Breast epithelium (tissue), 4 donors: ENCODE measurements at regions of chr2 and their contacts with region 1.

Region 1: DNA sequence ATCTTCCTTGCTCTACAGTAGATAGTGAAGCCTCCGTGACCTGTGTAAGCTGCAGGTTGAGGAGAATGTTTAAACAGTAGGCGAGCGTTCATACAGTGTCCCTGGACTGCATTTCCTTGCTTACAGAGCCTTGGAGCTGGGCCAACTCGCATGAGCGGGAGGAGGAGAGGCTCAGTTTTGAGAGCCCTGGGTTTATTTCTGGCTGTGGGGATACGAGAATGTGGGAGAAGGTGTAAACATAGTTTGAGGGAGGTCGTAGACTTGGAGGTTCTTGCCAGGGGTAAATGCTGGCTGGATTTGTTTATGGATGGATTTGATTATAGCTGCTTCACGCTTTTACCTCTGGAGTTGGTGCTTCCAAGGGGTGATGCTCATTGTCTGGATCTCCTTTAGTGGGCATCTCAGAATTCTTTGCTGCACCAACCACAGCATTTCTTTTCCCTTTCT is 20.8 kb downstream of the CRIM1 start:
- DNase-seq: peak; percentile 64 to 75
- H3K4me3 ChIP-seq: peak overlapping the region in 1 of 3 donors; percentile 31
- H3K27ac ChIP-seq: peak overlapping the region; percentile 49 to 56
- H3K4me1 ChIP-seq: peaks cover 14 to 28% of the 10 kb centered on the region in 2 donors
- H3K27me3 ChIP-seq: no peaks in the 10 kb centered on the region
- CTCF ChIP-seq: no peak
- POLR2A ChIP-seq: no peak

Region 2: GRCh38 chr2:38377050-38377828 is 2000.9 kb after region 1 on chr2 and contains the start of gene ATL2:
- intact Hi-C with region 1: loop called (anchors 10 kb)
- DNase-seq: peak; percentile 91 to 93
- H3K4me3 ChIP-seq: peak within 1 kb of the TSS; percentile 66 to 94 (median 88)
- H3K27ac ChIP-seq: peak within 1 kb of the TSS; percentile 99
- H3K4me1 ChIP-seq: peaks cover 0 to 17% of the 10 kb centered on the region in 2 donors
- H3K27me3 ChIP-seq: no peaks in the 10 kb centered on the region
- CTCF ChIP-seq: no peak
- POLR2A ChIP-seq: peak; percentile 86
- total RNA-seq, gene ATL2: 66.4 to 179 (median 159) TPM